Thyroid gland (tissue), 4 donors: ENCODE measurements at regions of chr10 and their contacts with region 1.

Region 1: DNA sequence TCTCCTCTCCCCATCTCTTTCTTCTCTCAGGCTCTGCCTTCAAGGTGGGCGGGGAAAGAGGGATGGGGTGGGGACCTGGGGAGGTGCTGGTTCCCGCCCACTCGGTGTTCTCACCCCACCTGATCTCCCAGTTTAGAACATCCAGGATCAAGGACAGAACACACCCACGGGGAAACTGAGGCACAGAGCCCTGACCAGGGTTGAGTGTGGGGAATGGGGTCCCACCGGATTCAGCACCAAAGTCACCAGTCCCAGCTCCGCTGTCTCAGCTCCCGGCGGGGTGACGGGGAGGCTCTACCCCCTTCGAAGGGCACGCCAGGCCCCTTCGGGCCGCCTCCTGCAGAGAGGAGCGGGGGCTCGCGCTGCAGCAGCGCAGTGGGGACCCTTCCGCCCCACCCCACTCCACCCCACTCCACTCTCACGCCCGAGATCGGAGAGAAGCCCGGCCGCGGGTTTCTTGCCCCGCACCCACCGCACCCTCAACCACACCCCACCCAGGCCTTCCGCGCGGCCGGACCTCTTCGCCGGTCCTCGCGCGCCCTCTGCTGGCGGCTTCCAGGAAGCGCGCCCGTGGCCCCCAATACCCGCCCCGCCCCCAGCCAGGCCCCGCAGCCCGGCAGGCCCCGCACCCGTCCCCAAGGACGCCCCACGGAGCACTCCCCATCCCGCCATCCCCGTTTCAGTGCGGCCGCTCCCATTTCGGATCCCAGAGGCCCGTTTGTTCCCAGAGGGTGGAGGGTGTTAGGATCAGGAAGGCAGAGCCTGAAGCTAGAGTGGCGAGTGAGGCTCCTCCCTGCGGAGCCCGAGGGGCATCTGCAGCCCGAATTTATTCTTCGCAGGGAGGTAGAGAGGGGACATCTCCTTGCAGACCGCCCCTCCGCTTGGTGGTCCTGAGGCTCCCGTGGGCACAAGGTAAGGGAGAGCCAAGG is 18.0 kb downstream of the POLL start:
- DNase-seq: peak; percentile 67 to 74
- H3K4me3 ChIP-seq: peak overlapping the region in 2 of 3 donors; percentile 11 to 34
- H3K27ac ChIP-seq: no peak overlapping the region
- H3K4me1 ChIP-seq: peaks cover 6 to 20% of the 10 kb centered on the region in 2 donors
- H3K27me3 ChIP-seq: peaks cover 7% of the 10 kb centered on the region
- CTCF ChIP-seq: peak; percentile 41 to 99 (median 90)
- POLR2A ChIP-seq: no peak

Region 2: DNA sequence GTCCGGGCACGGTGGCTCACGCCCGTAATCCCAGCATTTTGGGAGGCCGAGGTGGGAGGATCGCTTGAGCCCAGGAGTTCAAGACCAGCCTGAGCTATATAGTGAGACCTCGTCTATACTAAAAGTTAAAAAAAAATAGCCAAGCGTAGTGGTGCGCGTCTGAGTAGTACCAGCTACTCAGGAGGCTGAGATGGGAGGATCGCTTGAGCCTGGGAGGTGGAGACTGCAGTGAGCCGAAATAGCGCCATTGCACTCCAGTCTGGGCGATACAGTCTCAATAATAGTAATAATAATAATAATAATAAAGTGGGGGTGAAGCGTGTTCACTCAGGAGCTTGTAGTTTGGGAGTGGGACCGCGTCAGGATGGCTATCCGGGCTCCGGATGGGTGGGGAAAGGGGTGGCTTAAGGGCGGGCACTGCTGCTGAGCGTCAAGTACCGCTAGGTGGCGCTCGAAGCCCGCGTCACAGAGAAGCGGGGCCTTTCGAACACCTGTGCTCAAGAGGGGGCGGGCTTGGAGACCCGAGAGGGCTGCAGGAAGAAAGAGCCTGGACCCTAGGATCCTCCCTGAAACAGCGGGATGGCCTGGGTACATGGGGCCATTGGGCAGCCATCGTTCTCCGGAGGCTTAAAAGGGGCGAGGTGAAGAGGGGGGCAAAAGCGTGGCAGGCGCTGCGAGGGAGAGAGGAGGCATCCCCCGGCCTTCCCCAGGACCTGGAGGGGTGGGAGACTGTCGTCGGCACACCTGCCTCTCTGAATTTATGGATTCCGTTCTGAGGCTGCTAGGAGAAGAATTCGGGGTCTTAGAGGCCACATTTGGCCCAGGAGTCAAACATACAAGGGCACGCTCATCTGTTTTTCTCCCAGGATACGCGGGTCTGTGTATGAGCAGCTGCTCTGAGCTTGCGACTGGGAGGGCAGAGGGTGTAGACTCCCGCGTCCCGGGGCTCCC is 355.4 kb before region 1 on chr10:
- intact Hi-C with region 1: loop called (anchors 5 kb)
- DNase-seq: peak; percentile 49
- H3K4me3 ChIP-seq: no peak overlapping the region
- H3K27ac ChIP-seq: no peak overlapping the region
- H3K4me1 ChIP-seq: peaks cover 10 to 33% of the 10 kb centered on the region in 2 donors
- H3K27me3 ChIP-seq: peaks cover 48% of the 10 kb centered on the region
- CTCF ChIP-seq: peak in 5 of 6 experiments; percentile 56 to 80 (median 57)
- POLR2A ChIP-seq: no peak

Region 3: GRCh38 chr10:101258179-101258885 is 311.8 kb before region 1 on chr10:
- intact Hi-C with region 1: no loop called
- DNase-seq: no peak
- H3K4me3 ChIP-seq: no peak overlapping the region
- H3K27ac ChIP-seq: no peak overlapping the region
- H3K4me1 ChIP-seq: no peaks in the 10 kb centered on the region
- H3K27me3 ChIP-seq: no peaks in the 10 kb centered on the region
- CTCF ChIP-seq: no peak
- POLR2A ChIP-seq: no peak

Region 4: GRCh38 chr10:101272229-101272868 is 297.8 kb before region 1 on chr10:
- intact Hi-C with region 1: loop called (anchors 5 kb)
- DNase-seq: peak; percentile 59 to 63
- H3K4me3 ChIP-seq: no peak overlapping the region
- H3K27ac ChIP-seq: no peak overlapping the region
- H3K4me1 ChIP-seq: no peaks in the 10 kb centered on the region
- H3K27me3 ChIP-seq: no peaks in the 10 kb centered on the region
- CTCF ChIP-seq: peak in 5 of 6 experiments; percentile 54 to 73 (median 66)
- POLR2A ChIP-seq: no peak